ENCODE measurements at regions of chr12 and their contacts with region 1.

Region 1: GRCh38 chr12:94012590-94012989 is 135.8 kb upstream of the PLXNC1 start:
- DNase-seq: no peak
- H3K4me3 ChIP-seq: no peak overlapping the region
- H3K4me3 Mint-ChIP-seq: no peak overlapping the region
- H3K27ac ChIP-seq: no peak overlapping the region
- H3K27ac Mint-ChIP-seq: no peak overlapping the region
- H3K4me1 ChIP-seq: peaks cover 8% of the 10 kb centered on the region
- H3K4me1 Mint-ChIP-seq: peaks cover 2 to 13% (median 10%) of the 10 kb centered on the region in 4 donors
- H3K27me3 ChIP-seq: no peaks in the 10 kb centered on the region
- H3K27me3 Mint-ChIP-seq: peaks cover 0 to 2% of the 10 kb centered on the region in 2 donors

Region 2: DNA sequence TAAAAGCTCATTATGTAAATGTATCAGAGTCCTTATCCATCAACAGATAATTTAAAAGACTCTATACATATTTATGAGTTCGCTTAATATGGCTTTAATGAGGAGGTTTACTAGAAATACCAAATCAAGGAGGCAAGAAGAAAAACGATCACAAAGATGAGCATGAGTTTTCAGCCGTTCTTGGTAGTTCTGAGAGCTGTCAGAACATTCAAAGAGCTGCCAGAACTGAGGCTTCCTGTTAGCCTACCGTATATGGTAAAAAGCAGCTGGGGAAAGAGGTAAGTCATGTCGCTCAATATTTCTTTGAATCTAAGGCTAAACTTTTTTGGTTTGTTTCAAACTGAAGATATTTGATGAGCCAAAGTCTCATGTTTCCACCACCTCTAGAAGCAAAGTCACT is 20.5 kb after region 1 on chr12:
- CTCF ChIA-PET with region 1: interaction called, 13 read pairs
- POLR2A ChIA-PET with region 1: interaction called, 6 read pairs
- intact Hi-C with region 1: no loop called
- DNase-seq: peak in 4 of 5 donors; percentile 14 to 36 (median 20)
- H3K4me3 ChIP-seq: no peak overlapping the region
- H3K4me3 Mint-ChIP-seq: peak overlapping the region; percentile 1 to 76 (median 60)
- H3K27ac ChIP-seq: no peak overlapping the region
- H3K27ac Mint-ChIP-seq: peak overlapping the region; percentile 19 to 92 (median 64)
- H3K4me1 ChIP-seq: peaks cover 40% of the 10 kb centered on the region
- H3K4me1 Mint-ChIP-seq: peaks cover 21 to 43% (median 34%) of the 10 kb centered on the region in 4 donors
- H3K27me3 ChIP-seq: no peaks in the 10 kb centered on the region
- H3K27me3 Mint-ChIP-seq: peaks cover 8 to 9% of the 10 kb centered on the region in 2 donors

Region 3: DNA sequence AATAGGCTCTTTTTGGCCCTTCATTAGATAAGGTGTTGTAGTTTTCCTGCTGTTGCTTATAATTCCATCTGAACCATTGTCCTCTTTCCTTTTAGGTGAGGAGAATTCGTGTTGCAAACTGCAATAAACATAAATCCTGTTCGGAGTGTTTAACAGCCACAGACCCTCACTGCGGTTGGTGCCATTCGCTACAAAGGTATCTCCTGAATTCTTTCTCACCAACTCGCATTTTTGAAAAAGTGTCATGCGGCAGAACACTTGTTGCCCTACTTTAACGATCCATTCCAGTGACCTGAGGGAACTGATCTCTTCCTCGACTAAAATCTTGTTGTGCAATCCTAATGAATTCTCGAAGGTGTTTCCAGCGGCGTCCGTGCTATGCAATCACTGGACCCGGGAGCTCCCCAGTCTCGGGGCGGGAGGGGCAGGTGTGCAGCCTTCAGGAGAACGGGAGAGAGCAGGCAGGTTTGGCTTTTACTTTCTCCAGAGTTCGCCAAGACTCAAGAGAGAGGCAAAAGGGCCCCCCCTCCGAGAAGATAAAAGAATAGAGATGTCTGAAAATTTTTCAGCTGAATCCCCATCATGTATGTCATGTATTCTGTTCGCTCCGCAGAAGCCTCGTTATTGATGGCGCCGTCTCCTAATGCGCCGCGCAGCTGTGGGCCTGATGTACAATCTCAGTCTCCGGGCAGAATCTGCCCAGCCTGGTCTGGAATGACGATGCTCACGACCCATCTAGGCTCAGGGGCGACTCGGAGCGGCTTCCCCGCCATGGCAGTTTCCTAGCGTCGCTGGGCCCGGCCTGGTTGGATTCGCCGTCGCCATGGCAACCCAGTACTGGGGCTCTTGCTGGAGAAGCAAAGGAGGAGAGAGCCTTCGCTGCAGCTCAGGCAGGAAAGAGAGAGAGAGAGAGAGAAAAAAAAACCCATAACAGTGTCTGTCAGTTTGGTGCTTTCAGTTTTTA is 174.0 kb after region 1 on chr12:
- CTCF ChIA-PET with region 1: no interaction called
- POLR2A ChIA-PET with region 1: no interaction called
- intact Hi-C with region 1: no loop called
- DNase-seq: no peak
- H3K4me3 ChIP-seq: no peak overlapping the region
- H3K4me3 Mint-ChIP-seq: no peak overlapping the region
- H3K27ac ChIP-seq: no peak overlapping the region
- H3K27ac Mint-ChIP-seq: peak overlapping the region in 1 of 7 donors; percentile 43
- H3K4me1 ChIP-seq: no peaks in the 10 kb centered on the region
- H3K4me1 Mint-ChIP-seq: no peaks in the 10 kb centered on the region
- H3K27me3 ChIP-seq: no peaks in the 10 kb centered on the region
- H3K27me3 Mint-ChIP-seq: no peaks in the 10 kb centered on the region